Kidney (tissue), 22 donors: ENCODE measurements at regions of chr6 and their contacts with region 1.

Region 1: DNA sequence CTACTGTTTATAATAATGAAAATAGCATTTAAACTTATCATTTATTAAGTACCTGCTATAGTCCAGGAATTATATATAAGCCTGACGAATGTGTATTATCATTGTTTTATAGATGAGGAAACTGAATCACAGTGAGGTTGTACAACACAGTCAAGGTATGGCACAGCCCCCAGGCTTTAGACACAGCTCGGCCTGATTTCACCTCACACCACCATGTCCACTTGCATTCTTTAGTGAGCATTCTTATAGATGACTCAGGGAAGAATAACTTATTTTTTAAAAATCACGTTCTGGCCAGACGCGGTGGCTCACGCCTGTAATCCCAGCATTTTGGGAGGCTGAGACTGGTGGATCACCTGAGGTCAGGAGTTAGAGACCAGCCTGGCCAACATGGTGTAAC is 289.1 kb downstream of the SYNE1 start:
- DNase-seq: no peak
- H3K4me3 ChIP-seq: no peak overlapping the region
- H3K27ac ChIP-seq: no peak overlapping the region
- H3K4me1 ChIP-seq: no peaks in the 10 kb centered on the region
- H3K27me3 ChIP-seq: no peaks in the 10 kb centered on the region
- CTCF ChIP-seq: no peak

Region 2: DNA sequence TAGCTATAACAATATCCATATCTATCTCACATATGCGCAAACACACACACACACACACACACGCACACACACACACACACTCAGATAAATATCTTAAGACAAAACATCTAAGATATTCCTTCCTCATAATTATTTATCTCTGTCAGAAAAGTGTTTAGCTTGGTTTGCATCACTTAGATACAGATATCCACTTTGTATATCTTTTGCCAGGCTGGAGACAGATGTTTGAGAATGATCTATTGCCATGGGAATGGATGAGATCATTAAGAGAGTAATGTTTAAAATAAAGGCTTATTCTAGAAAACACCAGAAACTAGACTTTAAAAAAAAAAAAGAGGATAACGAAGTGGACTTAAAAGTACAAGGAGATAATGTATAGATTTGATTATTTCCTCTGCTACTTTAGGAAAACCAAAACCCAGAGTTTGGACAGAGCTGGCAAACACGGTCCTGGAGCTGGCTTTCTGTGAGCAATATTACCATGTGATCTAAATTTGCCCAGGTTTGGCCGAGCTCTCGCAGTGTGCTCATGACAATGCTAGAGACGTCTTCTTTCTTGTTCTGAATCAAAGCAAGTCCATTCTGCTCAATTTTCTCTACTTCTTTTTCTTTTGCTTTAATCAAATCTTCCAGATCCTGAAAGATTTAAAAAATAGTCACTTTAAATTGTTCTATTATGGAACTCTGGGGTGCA is 122.7 kb before region 1 on chr6:
- intact Hi-C with region 1: loop called (anchors 10 kb)
- DNase-seq: no peak
- H3K4me3 ChIP-seq: no peak overlapping the region
- H3K27ac ChIP-seq: no peak overlapping the region
- H3K4me1 ChIP-seq: no peaks in the 10 kb centered on the region
- H3K27me3 ChIP-seq: no peaks in the 10 kb centered on the region
- CTCF ChIP-seq: no peak